Mammary epithelial cell (primary cell): ENCODE measurements at regions of chr5 and their contacts with region 1.

Region 1: DNA sequence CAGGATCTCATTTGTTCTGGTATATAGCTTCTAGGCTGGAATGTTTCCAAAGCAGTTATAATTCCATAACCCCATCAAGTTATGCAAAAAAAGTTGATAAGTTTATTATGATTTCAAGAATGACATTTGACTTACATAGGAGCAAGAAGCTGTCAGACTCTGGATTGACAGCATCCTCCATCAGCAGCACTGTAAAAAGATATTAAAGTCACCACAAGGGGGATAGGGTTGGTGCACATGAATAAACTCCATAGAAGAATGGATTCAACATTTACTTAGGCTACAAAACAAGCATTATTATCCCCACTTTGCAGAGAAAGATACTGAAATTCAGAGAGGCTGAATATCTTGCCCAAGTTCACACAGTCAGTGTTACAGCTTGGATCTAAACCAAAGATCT is 208.9 kb upstream of the SLC30A5 start:
- DNase-seq: peak; percentile 11
- H3K4me3 ChIP-seq: no peak overlapping the region
- H3K27ac ChIP-seq: no peak overlapping the region
- H3K4me1 ChIP-seq: no peaks in the 10 kb centered on the region
- H3K27me3 ChIP-seq: peaks cover 1% of the 10 kb centered on the region
- CTCF ChIP-seq: peak; percentile 42

Region 2: GRCh38 chr5:68848091-68848490 is 36.8 kb before region 1 on chr5:
- CTCF ChIA-PET with region 1: no interaction called
- dilution Hi-C with region 1: no loop called
- in situ Hi-C with region 1: no loop called
- intact Hi-C with region 1: no loop called
- DNase-seq: peak; percentile 85
- H3K4me3 ChIP-seq: no peak overlapping the region
- H3K27ac ChIP-seq: no peak overlapping the region
- H3K4me1 ChIP-seq: peaks cover 16% of the 10 kb centered on the region
- H3K27me3 ChIP-seq: no peaks in the 10 kb centered on the region
- CTCF ChIP-seq: no peak

Region 3: GRCh38 chr5:68962757-68963484 is 78.0 kb after region 1 on chr5:
- CTCF ChIA-PET with region 1: no interaction called
- dilution Hi-C with region 1: no loop called
- in situ Hi-C with region 1: no loop called
- intact Hi-C with region 1: loop called (anchors 1 kb)
- DNase-seq: peak; percentile 48
- H3K4me3 ChIP-seq: no peak overlapping the region
- H3K27ac ChIP-seq: no peak overlapping the region
- H3K4me1 ChIP-seq: no peaks in the 10 kb centered on the region
- H3K27me3 ChIP-seq: no peaks in the 10 kb centered on the region
- CTCF ChIP-seq: peak; percentile 75 to 92

Region 4: DNA sequence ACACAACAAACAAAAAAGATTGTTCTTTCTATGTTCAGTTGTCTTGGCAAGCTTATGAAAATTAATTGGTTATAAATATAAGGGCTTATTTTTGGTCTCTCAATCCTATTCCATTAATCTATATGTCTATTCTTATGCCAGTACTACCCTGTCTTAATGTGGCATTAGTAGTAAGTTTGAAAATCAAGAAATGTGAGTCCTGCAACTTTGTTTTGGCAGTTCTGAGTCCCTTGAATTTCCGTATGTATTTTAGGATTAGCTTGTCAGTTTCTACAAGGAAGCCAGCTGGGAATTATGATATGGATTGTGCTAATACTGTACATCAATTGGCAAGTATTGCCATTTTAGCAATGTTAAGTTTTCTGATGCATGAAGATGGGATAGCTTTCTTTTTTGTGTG is 458.2 kb after region 1 on chr5:
- CTCF ChIA-PET with region 1: interaction called, 10 read pairs
- dilution Hi-C with region 1: no loop called
- in situ Hi-C with region 1: no loop called
- intact Hi-C with region 1: no loop called
- DNase-seq: no peak
- H3K4me3 ChIP-seq: no peak overlapping the region
- H3K27ac ChIP-seq: no peak overlapping the region
- H3K4me1 ChIP-seq: no peaks in the 10 kb centered on the region
- H3K27me3 ChIP-seq: no peaks in the 10 kb centered on the region
- CTCF ChIP-seq: no peak